PC-9 (cell line): ENCODE measurements at regions of chr16 and their contacts with region 1.

Region 1: GRCh38 chr16:57300387-57301125 is 16.1 kb upstream of the PLLP start:
- DNase-seq: peak; percentile 96 to 98
- H3K4me3 ChIP-seq: peak overlapping the region; percentile 64; the same call in 1 of the 2 replicates
- H3K27ac ChIP-seq: peak overlapping the region; percentile 67
- H3K4me1 ChIP-seq: peaks cover 31% of the 10 kb centered on the region
- H3K27me3 ChIP-seq: no peaks in the 10 kb centered on the region
- CTCF ChIP-seq: peak; percentile 92

Region 2: DNA sequence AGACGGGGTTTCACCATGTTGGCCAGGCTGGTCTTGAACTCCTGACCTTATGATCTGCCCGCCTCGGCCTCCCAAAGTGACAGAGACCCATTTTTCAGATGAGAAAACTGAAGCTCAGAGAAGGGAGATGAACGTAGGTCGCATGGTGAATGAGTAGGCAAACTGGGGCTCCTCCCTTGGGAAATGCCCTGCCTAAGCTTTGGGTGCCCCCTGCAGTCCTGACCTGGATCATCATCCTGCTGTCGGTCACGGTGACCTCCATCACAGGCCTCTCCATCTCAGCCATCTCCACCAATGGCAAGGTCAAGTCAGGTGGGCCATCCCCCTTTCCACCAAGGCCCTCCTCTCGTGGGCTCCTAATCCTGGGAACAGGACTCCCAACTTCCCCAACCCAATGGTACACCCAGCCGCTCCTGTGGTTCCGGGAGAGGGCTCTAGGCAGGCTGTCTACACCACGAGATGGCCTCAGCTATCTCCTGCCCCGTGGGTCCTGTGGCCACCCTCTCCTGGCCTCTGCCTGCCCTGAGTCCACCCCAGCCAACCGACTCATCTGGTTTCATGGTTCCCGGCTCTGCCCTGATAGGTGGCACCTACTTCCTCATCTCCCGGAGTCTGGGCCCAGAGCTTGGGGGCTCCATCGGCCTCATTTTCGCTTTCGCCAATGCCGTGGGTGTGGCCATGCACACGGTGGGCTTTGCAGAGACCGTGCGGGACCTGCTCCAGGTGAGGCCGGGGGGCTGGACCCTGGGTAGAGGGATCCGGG is 430.9 kb before region 1 on chr16:
- CTCF ChIA-PET with region 1: no interaction called
- POLR2A ChIA-PET with region 1: no interaction called
- intact Hi-C with region 1: loop called (anchors 1 kb)
- DNase-seq: peak in 1 of 2 experiments; percentile 42
- H3K4me3 ChIP-seq: no peak overlapping the region
- H3K27ac ChIP-seq: no peak overlapping the region
- H3K4me1 ChIP-seq: peaks cover 7% of the 10 kb centered on the region; the same call in 1 of the 2 replicates
- H3K27me3 ChIP-seq: no peaks in the 10 kb centered on the region
- CTCF ChIP-seq: peak; percentile 44; the same call in 1 of the 2 replicates

Region 3: DNA sequence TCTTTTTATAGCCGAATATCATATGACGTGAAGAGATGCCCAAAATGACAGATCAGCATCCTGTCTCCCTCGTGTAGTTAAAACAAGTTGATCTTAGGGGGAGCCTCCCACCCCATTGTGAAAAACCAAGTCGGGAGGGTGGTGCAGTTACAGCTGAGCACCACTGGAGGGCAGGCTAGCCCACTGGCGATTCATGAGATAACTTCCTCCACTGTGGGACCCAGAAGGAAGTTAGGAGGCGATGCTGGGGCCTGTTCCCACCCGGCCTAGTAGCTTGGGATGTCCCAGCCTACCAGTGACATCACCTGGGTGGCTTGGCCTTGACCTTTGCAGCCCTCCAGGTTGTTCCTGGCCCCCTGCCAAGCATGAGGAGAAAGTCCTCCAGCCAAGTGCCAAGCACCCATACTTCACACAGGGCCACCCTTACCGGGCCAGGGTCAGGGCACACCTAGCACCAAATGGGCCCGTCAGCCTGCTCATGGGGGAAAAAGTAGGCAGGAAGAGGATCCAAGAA is 216.2 kb before region 1 on chr16:
- CTCF ChIA-PET with region 1: no interaction called
- POLR2A ChIA-PET with region 1: no interaction called
- intact Hi-C with region 1: loop called (anchors 1 kb)
- DNase-seq: peak; percentile 47 to 59
- H3K4me3 ChIP-seq: no peak overlapping the region
- H3K27ac ChIP-seq: no peak overlapping the region
- H3K4me1 ChIP-seq: no peaks in the 10 kb centered on the region
- H3K27me3 ChIP-seq: no peaks in the 10 kb centered on the region
- CTCF ChIP-seq: peak; percentile 98

Region 4: DNA sequence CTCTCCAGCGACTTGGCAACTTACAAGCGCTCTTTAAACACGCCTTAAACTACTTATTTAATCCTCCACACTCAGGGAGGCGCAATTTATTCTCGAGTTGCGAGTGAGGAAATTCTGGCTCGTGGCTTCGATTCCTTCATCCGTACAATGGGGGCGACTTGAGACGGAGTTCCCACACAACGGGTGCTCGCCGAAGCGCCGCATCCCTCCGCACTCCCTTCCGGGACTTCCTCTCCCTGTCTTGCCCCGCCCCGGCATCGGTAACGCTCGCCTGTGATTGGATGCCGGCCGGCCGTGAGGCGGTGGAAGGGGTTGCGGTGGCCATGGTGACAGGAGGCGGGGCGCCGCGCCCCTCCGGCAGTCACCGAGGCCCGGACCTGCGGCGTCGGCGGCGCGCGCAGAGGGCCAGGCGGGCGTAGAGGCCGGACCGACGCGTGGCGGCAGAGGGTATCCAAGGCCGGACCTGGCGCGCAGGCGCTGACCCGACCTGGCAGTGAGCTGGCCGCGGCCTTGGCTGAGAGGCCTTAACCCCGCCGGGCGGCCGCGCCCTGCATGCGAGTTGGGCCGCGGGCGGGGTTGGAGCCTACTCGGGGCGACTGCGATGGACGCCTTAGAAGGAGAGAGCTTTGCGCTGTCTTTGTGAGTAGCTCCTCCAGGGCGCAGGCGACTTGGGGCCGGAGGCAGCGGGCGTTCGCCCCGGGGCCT is 55.6 kb before region 1 on chr16 and contains the start of gene ARL2BP:
- CTCF ChIA-PET with region 1: no interaction called
- POLR2A ChIA-PET with region 1: no interaction called
- intact Hi-C with region 1: loop called (anchors 1 kb)
- DNase-seq: peak; percentile 89 to 98
- H3K4me3 ChIP-seq: peak within 1 kb of the TSS; percentile 78
- H3K27ac ChIP-seq: peak within 1 kb of the TSS; percentile 63
- H3K4me1 ChIP-seq: peaks cover 17% of the 10 kb centered on the region
- H3K27me3 ChIP-seq: no peaks in the 10 kb centered on the region
- CTCF ChIP-seq: no peak
- total RNA-seq, gene ARL2BP: 19.8 and 23.6 TPM in 2 replicates

Region 5: DNA sequence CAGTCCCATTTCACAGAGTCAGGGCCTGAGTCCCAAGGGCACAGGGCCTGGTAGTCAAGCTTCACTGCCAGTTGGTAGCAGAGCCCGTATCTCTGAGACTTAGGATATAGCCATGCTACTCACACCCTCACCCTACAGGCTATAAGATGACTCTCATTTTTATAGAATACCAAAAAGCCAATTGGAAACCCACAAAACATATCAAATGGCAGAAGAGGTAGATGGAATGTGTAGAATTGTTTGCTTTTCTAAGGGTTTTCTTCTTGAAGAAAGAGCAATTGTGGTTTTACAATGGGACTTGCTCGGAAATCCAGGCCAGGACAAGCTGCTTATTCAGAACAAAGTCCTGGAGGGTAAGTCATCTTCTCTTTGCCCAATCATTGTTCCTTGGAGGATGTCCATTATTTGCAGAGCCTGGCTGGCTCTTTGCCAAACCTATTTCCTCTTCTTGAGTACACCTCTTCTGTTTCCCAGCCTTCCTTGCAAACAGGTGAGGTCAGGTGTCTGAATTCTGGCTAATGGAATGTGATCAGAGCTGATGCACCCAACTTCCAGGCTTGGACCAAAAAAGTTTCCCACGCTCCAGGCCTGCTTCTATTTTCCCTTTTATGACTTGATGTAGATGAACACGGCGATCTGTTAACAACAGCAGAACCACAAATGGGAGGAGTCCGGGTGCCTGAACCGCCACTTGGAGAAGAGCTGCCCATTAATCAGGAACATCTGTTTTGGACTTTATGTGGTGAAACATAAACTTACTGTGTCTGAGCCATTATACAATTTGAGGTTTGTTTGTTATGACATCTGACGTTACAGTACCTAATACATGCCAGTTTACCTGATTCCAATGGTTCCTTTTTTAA is 41.1 kb after region 1 on chr16:
- CTCF ChIA-PET with region 1: no interaction called
- POLR2A ChIA-PET with region 1: no interaction called
- intact Hi-C with region 1: loop called (anchors 1 kb)
- DNase-seq: peak; percentile 89 to 100
- H3K4me3 ChIP-seq: peak overlapping the region; percentile 0; the same call in 1 of the 2 replicates
- H3K27ac ChIP-seq: peak overlapping the region; percentile 91
- H3K4me1 ChIP-seq: peaks cover 38% of the 10 kb centered on the region
- H3K27me3 ChIP-seq: no peaks in the 10 kb centered on the region
- CTCF ChIP-seq: no peak

Region 6: GRCh38 chr16:57422026-57422944 is 121.7 kb after region 1 on chr16:
- CTCF ChIA-PET with region 1: interaction called, 6 read pairs
- POLR2A ChIA-PET with region 1: interaction called, 12 read pairs
- intact Hi-C with region 1: loop called (anchors 1 kb)
- DNase-seq: peak; percentile 59 to 64
- H3K4me3 ChIP-seq: no peak overlapping the region
- H3K27ac ChIP-seq: no peak overlapping the region
- H3K4me1 ChIP-seq: peaks cover 23% of the 10 kb centered on the region
- H3K27me3 ChIP-seq: no peaks in the 10 kb centered on the region
- CTCF ChIP-seq: peak; percentile 85